Activated CD4-positive, alpha-beta T cell treated with anti-CD3 and anti-CD28 coated beads, Interleukin-2, amount 10 ng/mL, durations not matched to agents 24 days and 14 days (primary cell): ENCODE measurements at regions of chr1 and their contacts with region 1.

Region 1: DNA sequence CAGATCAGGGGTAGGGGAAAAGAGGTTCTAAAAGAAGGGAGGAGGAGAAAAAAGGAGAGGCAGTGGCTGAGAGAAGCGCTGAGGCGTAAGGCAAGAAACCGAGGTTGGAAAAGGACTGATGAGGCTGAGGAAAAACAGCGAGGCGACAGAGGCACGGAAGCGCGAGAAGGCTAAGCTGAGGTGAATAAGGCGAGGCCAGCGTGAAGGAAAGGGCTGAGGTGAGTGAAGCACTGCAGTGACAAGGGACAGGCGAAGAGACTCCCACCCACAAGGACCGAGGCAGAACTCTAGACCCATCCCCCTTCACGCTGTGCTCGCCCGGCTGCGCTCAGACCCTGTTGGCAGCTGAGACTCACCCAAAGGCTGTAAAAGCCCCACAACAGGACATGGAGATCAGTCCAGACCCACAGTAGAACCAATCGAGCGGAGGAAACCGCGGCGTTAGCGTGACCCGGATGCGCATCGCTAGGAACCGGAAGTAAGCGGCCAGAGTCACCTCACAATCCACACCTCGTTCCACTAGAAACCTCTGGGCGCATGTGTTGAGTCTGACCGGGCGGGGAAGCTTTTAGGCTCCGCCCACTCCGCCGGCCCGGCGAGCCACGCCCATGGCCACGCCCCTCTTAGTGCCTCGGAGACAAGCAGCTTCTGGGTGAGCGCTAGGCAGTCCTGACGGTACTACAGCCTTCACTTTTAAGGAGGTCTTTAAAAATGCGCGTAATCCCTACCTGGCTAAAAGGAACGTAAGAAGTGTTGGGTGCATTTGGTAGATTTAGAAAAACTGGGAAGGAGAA is at the start of gene EYA3:
- DNase-seq: peak; percentile 100
- H3K4me3 Mint-ChIP-seq: peak within 1 kb of the TSS; percentile 98
- H3K27ac Mint-ChIP-seq: peak within 1 kb of the TSS; percentile 96
- H3K4me1 Mint-ChIP-seq: peaks cover 19% of the 10 kb centered on the region
- H3K27me3 Mint-ChIP-seq: peaks cover 5% of the 10 kb centered on the region
- total RNA-seq, gene EYA3: 32.9 and 34.7 TPM in 2 replicates

Region 2: GRCh38 chr1:28056129-28056925 is 32.0 kb before region 1 on chr1:
- intact Hi-C with region 1: loop called (anchors 1 kb)
- DNase-seq: peak; percentile 83
- H3K4me3 Mint-ChIP-seq: peak overlapping the region; percentile 70
- H3K27ac Mint-ChIP-seq: peak overlapping the region; percentile 91
- H3K4me1 Mint-ChIP-seq: peaks cover 34% of the 10 kb centered on the region
- H3K27me3 Mint-ChIP-seq: no peaks in the 10 kb centered on the region

Region 3: GRCh38 chr1:28172713-28173150 is 84.4 kb after region 1 on chr1:
- intact Hi-C with region 1: loop called (anchors 1 kb)
- DNase-seq: peak; percentile 85
- H3K4me3 Mint-ChIP-seq: peak overlapping the region; percentile 47
- H3K27ac Mint-ChIP-seq: peak overlapping the region; percentile 15
- H3K4me1 Mint-ChIP-seq: peaks cover 48% of the 10 kb centered on the region
- H3K27me3 Mint-ChIP-seq: peaks cover 54% of the 10 kb centered on the region

Region 4: GRCh38 chr1:28208818-28209441 is 120.6 kb after region 1 on chr1:
- intact Hi-C with region 1: loop called (anchors 1 kb)
- DNase-seq: peak; percentile 90
- H3K4me3 Mint-ChIP-seq: no peak overlapping the region
- H3K27ac Mint-ChIP-seq: no peak overlapping the region
- H3K4me1 Mint-ChIP-seq: peaks cover 5% of the 10 kb centered on the region
- H3K27me3 Mint-ChIP-seq: no peaks in the 10 kb centered on the region